Activated CD4-positive, alpha-beta memory T cell treated with anti-CD3 and anti-CD28 coated beads for 36 hours (primary cell): ENCODE measurements at regions of chr3 and their contacts with region 1.

Region 1: DNA sequence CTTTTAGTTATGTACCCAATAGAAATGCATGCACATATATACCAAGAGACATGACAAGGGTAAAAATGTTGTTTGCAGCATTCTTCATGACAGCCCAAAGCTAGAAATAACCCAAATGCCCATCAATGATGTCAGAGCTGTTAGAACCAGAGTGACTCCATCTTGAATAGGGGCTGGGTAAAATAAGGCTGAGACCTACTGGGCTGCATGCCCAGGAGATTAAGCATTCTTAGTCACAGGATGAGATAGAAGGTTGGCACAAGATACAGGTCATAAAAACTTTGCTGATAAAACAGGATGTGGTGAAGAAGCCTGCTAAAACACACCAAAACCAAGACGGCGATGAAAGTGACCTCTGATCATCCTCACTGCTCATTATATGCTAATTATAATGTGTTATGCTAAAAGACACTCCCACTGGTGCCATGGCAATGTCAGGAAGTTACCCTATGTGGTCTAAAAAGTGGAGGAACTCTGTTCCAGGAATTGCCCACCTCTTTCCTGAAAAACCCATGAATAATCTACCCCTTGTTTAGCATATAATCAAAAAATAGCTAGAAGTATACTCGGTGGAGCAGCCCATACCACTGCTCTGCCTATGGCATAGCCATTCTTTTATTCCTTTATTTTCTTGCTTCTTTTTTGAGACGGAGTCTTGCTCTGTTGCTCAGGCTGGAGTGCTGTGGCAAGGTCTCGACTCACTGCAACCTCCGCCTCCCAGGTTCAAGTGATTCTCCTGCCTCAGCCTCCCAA is 32.9 kb downstream of the ZBTB11 start:
- DNase-seq: peak; percentile 69
- H3K4me3 Mint-ChIP-seq: no peak overlapping the region
- H3K27ac Mint-ChIP-seq: peak overlapping the region; percentile 87
- H3K4me1 Mint-ChIP-seq: peaks cover 32% of the 10 kb centered on the region
- H3K27me3 Mint-ChIP-seq: no peaks in the 10 kb centered on the region

Region 2: GRCh38 chr3:100463002-100463401 is 1181.0 kb before region 1 on chr3:
- CTCF ChIA-PET with region 1: no interaction called
- POLR2A ChIA-PET with region 1: no interaction called
- intact Hi-C with region 1: loop called (anchors 5 kb)
- DNase-seq: peak; percentile 14
- H3K4me3 Mint-ChIP-seq: no peak overlapping the region
- H3K27ac Mint-ChIP-seq: no peak overlapping the region
- H3K4me1 Mint-ChIP-seq: peaks cover 7% of the 10 kb centered on the region
- H3K27me3 Mint-ChIP-seq: no peaks in the 10 kb centered on the region

Region 3: GRCh38 chr3:101223016-101223415 is 421.0 kb before region 1 on chr3:
- CTCF ChIA-PET with region 1: no interaction called
- POLR2A ChIA-PET with region 1: no interaction called
- intact Hi-C with region 1: loop called (anchors 5 kb)
- DNase-seq: no peak
- H3K4me3 Mint-ChIP-seq: no peak overlapping the region
- H3K27ac Mint-ChIP-seq: no peak overlapping the region
- H3K4me1 Mint-ChIP-seq: peaks cover 15% of the 10 kb centered on the region
- H3K27me3 Mint-ChIP-seq: no peaks in the 10 kb centered on the region

Region 4: DNA sequence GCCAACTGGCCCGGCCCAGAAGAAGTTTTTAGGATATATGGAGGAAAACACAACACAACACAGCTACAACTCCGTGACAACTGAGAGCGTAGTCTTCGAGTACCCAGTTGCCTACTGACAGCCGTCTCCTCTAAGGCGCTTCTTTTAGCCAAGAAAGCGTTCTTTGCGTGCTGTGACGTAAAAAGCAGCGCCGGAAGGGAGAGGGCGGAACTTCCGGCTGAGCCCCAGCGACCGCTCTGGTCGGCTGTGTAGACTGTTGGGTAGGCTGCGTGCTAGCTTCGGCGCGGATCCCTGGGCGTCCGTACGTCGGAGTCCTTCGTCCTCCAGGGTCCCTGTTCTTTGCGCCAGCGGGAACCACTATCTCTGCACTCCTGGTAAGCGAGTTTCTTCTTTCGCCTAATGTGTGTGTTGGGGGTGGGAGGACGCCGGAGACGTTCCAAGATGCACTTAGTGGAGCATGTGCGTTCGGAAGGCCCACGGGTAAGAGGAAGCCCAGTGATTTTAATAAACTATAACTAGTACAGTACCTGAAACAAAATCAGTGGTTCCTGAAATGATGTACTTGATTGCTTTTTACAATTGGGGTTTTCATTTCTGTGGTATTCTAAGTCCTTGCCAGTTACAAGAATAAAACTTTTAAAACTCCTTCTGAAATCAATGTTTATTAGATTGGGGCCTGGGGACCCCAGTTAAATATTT is 82.3 kb before region 1 on chr3 and contains the start of gene TRMT10C:
- CTCF ChIA-PET with region 1: no interaction called
- POLR2A ChIA-PET with region 1: no interaction called
- intact Hi-C with region 1: loop called (anchors 1 kb)
- DNase-seq: peak; percentile 96
- H3K4me3 Mint-ChIP-seq: peak within 1 kb of the TSS; percentile 97
- H3K27ac Mint-ChIP-seq: peak within 1 kb of the TSS; percentile 96
- H3K4me1 Mint-ChIP-seq: peaks cover 37% of the 10 kb centered on the region
- H3K27me3 Mint-ChIP-seq: peaks cover 3% of the 10 kb centered on the region
- total RNA-seq, gene TRMT10C: 39.5 to 43.2 TPM

Region 5: GRCh38 chr3:101665851-101666250 is 21.8 kb after region 1 on chr3:
- CTCF ChIA-PET with region 1: no interaction called
- POLR2A ChIA-PET with region 1: no interaction called
- intact Hi-C with region 1: no loop called
- DNase-seq: no peak
- H3K4me3 Mint-ChIP-seq: no peak overlapping the region
- H3K27ac Mint-ChIP-seq: no peak overlapping the region
- H3K4me1 Mint-ChIP-seq: peaks cover 3% of the 10 kb centered on the region
- H3K27me3 Mint-ChIP-seq: no peaks in the 10 kb centered on the region

Region 6: DNA sequence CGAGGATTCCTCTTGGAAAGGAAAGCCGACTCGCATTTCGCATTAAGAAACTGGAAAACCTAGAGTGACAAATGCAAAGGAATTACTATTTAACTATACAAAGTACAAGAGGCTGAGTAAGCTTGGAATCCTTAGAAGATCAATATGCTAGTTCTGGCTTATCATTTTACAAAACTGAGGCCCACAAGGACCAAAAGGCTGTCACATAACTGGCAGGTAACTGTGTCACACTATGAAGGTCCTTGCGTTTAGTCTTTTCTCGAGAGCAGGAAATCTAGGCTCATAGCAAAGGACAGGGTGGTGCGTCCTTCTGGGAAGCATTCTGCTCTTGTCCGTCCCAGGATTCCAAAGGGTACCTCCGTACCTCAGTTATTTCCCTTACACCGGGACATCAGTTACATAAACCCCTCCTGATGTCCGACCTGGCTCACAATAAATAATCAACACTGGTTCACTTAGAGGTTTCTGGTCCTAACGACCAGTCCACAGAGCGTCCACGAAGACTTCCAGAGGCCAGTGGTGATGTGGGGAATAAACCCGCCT is 41.9 kb after region 1 on chr3:
- CTCF ChIA-PET with region 1: no interaction called
- POLR2A ChIA-PET with region 1: no interaction called
- intact Hi-C with region 1: loop called (anchors 1 kb)
- DNase-seq: no peak
- H3K4me3 Mint-ChIP-seq: peak overlapping the region; percentile 99
- H3K27ac Mint-ChIP-seq: peak overlapping the region; percentile 99
- H3K4me1 Mint-ChIP-seq: peaks cover 40% of the 10 kb centered on the region
- H3K27me3 Mint-ChIP-seq: no peaks in the 10 kb centered on the region

Region 7: GRCh38 chr3:101913173-101913572 is 269.1 kb after region 1 on chr3:
- CTCF ChIA-PET with region 1: no interaction called
- POLR2A ChIA-PET with region 1: no interaction called
- intact Hi-C with region 1: no loop called
- DNase-seq: no peak
- H3K4me3 Mint-ChIP-seq: no peak overlapping the region
- H3K27ac Mint-ChIP-seq: no peak overlapping the region
- H3K4me1 Mint-ChIP-seq: peaks cover 3% of the 10 kb centered on the region
- H3K27me3 Mint-ChIP-seq: no peaks in the 10 kb centered on the region